GM10248 (cell line): ENCODE measurements at regions of chr18 and their contacts with region 1.

Region 1: DNA sequence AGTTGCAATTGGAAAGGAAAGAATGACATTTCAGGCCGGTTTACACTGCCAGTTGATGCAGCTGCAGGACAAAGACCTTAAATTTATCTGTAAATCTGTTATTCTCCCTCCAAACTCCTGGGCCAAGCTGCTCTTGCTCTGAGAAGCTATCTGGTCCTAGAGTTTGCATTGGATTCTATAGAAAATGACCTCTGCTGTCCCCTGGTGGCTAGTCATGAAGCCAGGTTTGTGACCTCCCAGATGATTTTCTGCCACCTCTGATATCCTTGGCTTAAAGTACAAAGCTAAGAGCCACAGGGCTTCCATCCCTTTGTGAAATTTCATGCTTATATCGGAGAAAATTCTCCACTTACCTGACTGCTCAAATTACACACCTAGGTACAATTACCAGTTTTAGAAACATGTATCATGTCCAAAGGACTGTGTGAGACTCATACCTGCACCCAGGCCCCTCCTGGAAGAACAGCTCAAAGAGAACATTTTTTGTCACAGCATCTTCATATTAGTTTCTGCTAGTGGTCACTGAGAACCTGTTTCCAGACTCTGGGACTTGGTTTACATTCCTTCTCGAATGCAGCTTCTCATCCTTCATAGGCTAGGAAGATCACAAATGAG is 28.9 kb upstream of the IER3IP1 start:
- DNase-seq: peak; percentile 26
- CTCF ChIP-seq: peak; percentile 76

Region 2: GRCh38 chr18:47067648-47068047 is 137.4 kb before region 1 on chr18:
- CTCF ChIA-PET with region 1: interaction called, 12 read pairs
- POLR2A ChIA-PET with region 1: no interaction called
- DNase-seq: no peak
- CTCF ChIP-seq: no peak

Region 3: DNA sequence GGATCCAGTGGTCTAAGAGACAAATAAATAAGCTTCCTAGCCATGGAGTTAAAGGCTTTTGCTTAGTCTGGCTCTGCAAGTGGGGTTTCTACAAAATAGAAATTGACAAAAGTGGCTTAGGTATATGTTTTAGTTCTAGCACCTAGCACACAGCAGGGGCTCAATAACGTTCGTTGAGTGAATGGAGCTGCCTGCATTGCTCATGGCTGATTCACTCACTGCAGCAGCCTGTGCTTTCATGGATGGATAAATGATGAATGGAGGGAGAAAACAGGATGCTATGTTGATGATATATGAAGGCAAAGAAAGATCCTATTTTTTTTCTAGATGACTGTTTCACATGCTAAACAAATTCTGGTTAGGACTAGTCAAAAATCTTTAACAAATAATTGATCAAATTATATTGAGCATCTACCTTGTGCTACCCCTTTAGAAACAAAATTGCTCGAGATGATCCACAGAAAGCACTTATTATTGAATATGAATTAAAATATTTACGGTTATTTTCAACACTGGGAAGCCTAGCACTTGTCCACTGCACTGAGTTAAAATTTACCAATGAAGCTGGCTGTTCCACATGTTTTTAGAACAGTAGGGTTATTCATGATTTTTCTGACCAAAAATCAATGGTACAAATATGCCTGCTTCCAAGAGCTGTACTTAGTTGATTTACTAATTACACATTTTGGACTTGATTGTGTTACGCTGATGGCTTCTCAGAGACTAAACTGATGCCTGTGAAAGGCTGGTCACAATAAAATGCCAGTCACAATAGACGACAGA is 94.3 kb before region 1 on chr18:
- CTCF ChIA-PET with region 1: interaction called, 24 read pairs
- POLR2A ChIA-PET with region 1: no interaction called
- DNase-seq: no peak
- CTCF ChIP-seq: no peak

Region 4: DNA sequence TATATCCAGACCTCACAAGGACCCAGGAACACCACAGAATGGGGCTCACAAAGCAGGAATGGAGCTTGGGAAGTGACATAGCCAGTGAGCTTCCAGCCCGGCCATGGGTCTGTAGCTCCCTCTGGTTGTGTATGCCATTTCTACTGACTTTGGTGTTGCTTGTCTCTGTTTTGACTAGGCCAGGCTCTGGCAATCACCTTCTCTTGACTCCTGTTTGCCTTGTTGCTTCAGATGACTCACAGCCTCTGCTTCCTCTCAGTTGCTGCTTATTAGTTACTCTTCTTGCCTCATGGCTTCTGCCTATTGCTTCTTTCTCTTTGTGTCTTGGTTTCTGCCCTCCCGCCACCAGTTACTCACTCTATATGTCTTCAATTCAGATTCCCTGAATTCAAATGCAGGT is 13.1 kb before region 1 on chr18:
- CTCF ChIA-PET with region 1: interaction called, 32 read pairs
- POLR2A ChIA-PET with region 1: no interaction called
- DNase-seq: no peak
- CTCF ChIP-seq: no peak